ENCODE measurements at regions of chr20 and their contacts with region 1.

Region 1: DNA sequence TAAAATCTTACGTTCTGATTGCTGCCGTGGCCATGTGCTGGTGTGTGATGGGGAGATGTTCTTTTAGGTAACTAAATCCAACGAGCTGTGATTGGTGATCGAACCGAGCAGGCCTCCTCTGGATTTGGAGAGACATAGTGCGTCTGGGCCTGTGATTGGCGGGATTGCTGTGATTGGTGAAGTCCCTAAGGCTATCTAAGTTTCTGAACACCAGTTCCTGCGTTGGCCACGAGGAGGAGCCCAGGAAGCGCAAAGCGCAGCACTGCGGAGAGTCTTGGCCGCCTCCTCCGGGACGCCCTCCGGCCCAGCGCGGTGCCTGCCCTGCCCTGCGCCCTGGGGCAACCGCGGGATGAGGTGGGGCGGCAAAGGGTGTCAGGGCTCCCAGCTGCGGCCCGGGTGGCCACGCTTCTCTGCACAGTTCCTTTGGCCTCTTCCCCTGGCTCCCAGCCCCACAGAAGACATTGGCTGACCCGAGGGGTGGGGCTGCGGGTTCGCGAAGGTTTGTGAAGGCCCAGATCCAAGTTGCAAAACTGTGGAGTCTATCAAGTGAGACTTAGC is 33.0 kb downstream of the HNF4A start:
- DNase-seq: peak; percentile 88
- H3K4me3 ChIP-seq: peak overlapping the region in 1 of 8 donors; percentile 37
- H3K27ac ChIP-seq: no peak overlapping the region
- H3K4me1 ChIP-seq: peaks cover 0 to 11% (median 7%) of the 10 kb centered on the region in 6 donors
- H3K27me3 ChIP-seq: peaks cover 0 to 65% (median 3%) of the 10 kb centered on the region in 7 donors
- CTCF ChIP-seq: peak in 10 of 11 experiments; percentile 40 to 78 (median 60)
- POLR2A ChIP-seq: no peak

Region 2: DNA sequence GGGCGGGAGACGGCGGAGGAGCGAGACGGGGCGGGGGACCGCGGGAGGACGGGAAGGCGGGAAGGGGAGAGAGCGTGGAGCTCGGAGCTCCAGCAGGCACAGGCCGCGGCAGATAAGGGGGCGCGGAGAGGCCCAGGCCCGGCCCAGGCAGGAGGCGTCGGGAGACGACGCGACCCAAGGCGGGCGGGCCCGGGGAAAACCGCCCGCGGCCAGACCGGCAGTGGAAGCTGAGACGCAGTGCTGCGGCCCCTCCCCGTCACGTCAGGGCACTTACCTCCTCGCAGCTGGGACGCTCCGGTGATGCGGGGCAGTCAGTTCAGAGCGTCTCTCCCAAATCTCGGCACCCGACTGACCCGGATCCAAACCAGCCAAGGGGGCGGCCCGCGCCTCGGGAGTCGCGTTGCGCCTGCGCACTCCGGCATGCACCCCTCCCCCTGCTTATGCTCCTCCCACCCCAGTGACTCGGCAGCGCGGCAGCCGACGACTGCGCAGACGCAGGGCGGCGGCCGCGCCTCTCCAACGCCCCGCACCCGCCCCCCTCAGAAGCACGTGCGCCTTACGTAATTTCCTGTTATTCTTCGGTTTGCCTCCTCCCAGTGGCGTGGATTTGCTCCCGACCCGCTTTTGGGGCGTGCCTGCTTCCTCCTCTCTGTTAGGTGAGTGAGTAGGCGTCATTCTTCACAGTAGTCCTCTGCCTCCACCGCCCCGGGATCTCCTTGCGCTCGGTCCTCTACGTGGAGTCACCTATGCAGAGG is 177.9 kb before region 1 on chr20 and contains the start of gene OSER1:
- intact Hi-C with region 1: loop called (anchors 10 kb)
- DNase-seq: peak; percentile 99
- H3K4me3 ChIP-seq: peak within 1 kb of the TSS; percentile 76 to 99 (median 95)
- H3K27ac ChIP-seq: peak within 1 kb of the TSS; percentile 87 to 99 (median 98)
- H3K4me1 ChIP-seq: peaks cover 18 to 76% (median 58%) of the 10 kb centered on the region in 6 donors
- H3K27me3 ChIP-seq: no peaks in the 10 kb centered on the region
- CTCF ChIP-seq: peak in 4 of 11 experiments; percentile 17 to 51 (median 40)
- POLR2A ChIP-seq: peak; percentile 86 to 95 (median 94)
- total RNA-seq, gene OSER1: 28.5 to 42.0 (median 36.1) TPM

Region 3: DNA sequence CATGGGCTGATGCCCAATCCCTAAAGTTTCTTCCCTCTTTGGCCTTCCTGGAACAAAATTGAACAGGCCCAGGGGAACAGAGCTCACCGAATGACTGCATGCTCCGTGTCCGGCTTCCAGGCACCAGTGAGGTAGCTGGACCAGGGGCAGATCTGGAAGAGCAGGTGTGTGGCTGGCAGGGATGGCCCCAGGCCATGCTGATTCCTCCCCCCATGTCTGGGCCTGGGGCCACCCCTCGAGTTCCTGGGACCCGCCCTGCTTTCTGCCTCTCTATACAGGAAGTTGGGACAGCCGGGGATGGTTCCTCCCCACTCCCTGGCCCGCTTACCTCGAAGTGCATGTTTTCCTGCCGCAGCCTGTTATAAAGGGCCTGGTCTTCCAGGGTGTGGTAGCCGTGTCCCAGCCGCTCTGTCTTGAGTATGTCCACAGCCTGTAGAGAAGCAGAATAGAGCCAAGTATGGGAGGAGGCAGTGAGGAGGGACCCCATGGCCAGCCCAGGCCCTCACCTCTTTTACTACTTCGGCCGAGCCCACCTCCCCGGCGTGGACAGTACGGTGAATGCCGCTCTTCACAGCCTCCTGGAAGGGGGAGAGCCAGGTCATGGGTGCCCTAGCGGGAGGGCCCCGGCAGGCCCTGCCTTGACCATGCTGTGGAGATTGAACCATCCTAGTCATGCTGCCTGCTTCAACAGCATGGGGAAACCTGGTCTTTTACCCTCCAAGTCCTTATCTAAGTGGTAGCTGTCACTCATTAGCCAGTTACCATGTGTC is 234.1 kb after region 1 on chr20:
- intact Hi-C with region 1: no loop called
- DNase-seq: no peak
- H3K4me3 ChIP-seq: no peak overlapping the region
- H3K27ac ChIP-seq: no peak overlapping the region
- H3K4me1 ChIP-seq: peaks cover 0 to 13% (median 4%) of the 10 kb centered on the region in 6 donors
- H3K27me3 ChIP-seq: no peaks in the 10 kb centered on the region
- CTCF ChIP-seq: no peak
- POLR2A ChIP-seq: no peak